Endothelial cell of umbilical vein (primary cell): ENCODE measurements at regions of chr6 and their contacts with region 1.

Region 1: DNA sequence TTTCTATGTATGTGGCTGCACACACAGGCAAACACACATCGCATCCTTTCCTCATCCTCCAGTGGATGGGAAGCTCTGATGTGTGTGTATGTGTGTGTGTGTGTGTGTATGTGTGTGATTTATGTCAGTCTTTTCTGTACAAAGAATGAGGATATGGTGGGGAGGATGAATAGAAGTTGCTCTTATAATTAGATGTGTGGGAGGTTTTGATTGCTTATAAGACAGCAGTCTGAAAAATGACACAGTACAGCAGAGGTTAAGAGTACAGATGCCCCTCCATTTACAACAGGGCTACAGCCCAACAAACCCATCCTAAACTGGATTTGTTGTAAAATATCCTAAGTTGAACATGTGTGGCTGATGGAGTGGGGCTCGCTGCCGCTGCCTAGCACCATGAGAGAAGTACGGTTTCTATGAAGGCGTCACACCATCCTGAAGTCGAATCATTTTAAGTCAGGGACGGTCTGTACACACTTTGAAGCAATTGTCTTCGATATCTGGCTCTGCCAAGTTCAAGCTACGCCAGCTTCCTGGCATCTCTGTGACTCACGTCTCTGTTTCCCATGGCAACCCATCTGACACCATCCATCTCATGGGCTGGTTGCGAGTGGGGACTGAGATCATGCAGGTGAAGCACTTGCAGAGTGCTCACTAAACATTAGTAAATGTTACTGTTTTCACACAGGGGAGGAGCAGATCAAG is 252.6 kb downstream of the MYLK4 start:
- DNase-seq: peak; percentile 63
- H3K4me3 ChIP-seq: no peak overlapping the region
- H3K27ac ChIP-seq: no peak overlapping the region
- H3K4me1 ChIP-seq: peaks cover 7% of the 10 kb centered on the region
- H3K27me3 ChIP-seq: no peaks in the 10 kb centered on the region
- CTCF ChIP-seq: no peak
- POLR2A ChIP-seq: no peak

Region 2: DNA sequence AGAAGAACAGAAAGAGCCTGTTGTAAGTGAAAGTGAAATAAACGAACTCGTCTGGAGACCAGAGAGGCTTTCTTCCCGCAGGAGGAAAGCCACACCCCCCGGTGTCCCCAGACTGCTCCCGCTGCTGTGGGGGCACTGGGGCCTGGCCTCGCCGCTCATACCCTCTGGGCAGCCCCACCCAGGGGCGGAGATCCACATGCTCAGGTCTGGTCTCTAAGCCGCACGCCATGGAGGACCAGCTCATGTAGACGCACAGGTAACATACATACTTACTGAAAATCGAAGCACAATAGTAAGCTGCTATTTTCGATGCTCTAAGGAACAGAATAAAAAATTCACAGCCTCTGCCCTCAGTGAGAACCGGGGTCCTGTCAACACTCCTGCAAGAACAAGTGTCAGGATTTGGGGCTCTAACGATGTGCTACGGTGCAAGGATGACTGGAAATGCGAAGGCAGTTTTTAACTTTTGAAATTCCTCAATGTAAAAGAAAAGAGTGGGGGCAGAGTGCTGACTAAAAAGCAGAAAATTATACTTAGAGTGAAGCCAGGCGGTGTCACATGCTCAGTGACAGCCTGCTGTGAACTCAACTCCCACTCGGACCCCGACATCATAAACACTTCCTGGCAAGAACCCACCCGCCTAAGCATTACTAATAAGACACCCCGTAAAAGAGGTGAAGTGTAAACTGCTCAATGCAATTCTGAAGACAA is 1996.0 kb before region 1 on chr6:
- CTCF ChIA-PET with region 1: no interaction called
- POLR2A ChIA-PET with region 1: no interaction called
- dilution Hi-C with region 1: no loop called
- intact Hi-C with region 1: loop called (anchors 10 kb)
- DNase-seq: no peak
- H3K4me3 ChIP-seq: no peak overlapping the region
- H3K27ac ChIP-seq: no peak overlapping the region
- H3K4me1 ChIP-seq: no peaks in the 10 kb centered on the region
- H3K27me3 ChIP-seq: no peaks in the 10 kb centered on the region
- CTCF ChIP-seq: no peak
- POLR2A ChIP-seq: no peak